Thyroid gland (tissue), 4 donors: ENCODE measurements at regions of chr4 and their contacts with region 1.

Region 1: DNA sequence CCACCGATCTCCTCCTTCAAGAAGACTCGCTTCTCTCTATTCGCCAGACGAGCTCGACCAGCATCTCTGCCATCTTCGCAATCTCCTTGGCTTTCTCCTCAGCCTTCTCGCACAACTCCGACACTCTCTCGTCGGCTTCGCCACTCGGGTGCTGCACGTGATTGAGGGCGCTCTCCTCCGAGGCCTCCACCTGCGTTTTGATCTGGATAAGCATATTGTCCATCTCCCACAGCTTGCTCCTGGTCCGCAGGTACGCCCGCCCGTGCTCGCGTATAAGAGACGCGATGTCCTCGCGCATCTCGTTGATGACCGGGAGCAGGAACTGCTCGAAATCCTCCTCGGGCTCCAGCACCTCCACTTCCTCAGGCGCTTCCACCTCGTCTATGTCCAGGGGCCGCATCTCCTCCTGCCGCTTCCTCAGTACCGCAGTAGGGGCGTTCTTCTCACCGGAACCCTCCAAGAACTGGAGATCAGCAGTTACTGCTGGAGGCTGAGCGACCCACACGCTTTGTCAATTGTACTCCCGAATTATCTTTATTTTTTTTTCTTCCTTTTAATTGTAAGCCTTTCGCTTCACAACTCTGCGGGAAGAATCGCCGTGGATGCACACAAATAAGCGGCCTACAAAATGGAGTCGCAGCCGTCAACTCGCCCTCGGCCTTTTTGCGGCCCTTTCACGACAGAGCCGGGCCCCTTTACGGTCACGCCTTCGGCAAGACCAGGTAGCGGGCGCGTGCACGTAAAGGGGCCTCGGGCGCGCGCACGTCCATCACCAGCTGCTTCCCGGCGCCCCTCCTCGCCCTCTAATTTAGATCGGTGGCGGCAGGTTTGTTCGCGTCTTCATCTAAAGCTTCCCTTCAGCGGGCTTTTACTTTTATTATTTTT is at the start of gene MRFAP1L1:
- DNase-seq: peak; percentile 98
- H3K4me3 ChIP-seq: peak within 1 kb of the TSS; percentile 65 to 87 (median 86)
- H3K27ac ChIP-seq: peak within 1 kb of the TSS; percentile 70 to 79 (median 76)
- H3K4me1 ChIP-seq: peaks cover 31 to 33% of the 10 kb centered on the region in 2 donors
- H3K27me3 ChIP-seq: no peaks in the 10 kb centered on the region
- CTCF ChIP-seq: peak in 2 of 6 experiments; percentile 14 to 15
- POLR2A ChIP-seq: peak in 1 of 2 donors; percentile 67
- total RNA-seq, gene MRFAP1L1: 70.5 to 93.9 (median 76.2) TPM

Region 2: DNA sequence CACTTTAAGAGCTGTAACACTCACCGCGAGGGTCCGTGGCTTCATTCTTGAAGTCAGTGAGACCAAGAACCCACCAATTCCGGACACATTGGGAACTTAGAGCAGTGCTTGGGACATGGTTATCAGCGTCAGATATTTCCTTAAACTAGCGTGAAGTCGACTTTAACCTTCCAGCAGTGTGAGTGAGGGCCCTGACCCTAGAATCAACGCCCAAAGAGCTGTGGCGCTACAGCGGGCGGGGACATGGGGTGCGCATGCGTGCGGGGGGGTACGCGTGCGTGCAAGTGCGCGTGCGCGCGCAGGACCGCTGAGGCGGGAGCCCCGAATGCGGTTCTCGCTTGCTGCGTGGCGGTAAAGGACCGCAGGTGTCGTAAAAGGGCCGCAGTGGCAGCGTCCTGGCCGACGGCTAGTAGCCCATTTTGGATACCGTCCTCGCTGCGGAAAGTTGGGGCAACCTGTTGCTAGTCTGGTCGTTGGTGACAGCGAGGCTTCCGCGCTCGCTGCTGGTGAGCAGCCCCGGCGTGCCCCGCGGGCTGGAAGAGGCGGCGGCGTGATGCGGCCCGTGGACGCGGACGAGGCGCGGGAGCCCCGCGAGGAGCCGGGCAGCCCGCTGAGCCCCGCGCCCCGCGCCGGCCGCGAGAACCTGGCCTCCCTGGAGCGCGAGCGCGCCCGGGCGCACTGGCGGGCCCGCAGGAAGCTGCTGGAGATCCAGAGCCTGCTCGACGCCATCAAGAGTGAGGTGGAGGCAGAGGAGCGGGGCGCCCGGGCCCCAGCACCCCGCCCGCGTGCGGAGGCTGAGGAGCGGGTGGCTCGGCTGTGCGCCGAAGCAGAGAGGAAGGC is 35.6 kb before region 1 on chr4:
- intact Hi-C with region 1: loop called (anchors 5 kb)
- DNase-seq: peak; percentile 95 to 96
- H3K4me3 ChIP-seq: peak overlapping the region; percentile 28 to 56 (median 33)
- H3K27ac ChIP-seq: peak overlapping the region; percentile 71 to 78 (median 76)
- H3K4me1 ChIP-seq: peaks cover 20 to 27% of the 10 kb centered on the region in 2 donors
- H3K27me3 ChIP-seq: no peaks in the 10 kb centered on the region
- CTCF ChIP-seq: peak in 1 of 6 experiments; percentile 10
- POLR2A ChIP-seq: peak in 1 of 2 donors; percentile 79